AG04449 (cell line): ENCODE measurements at regions of chr19 and their contacts with region 1.

Region 1: GRCh38 chr19:10565567-10566407 is at the start of gene KRI1:
- DNase-seq: peak; percentile 67
- H3K4me3 ChIP-seq: peak within 1 kb of the TSS; percentile 98
- CTCF ChIP-seq: peak; percentile 53

Region 2: GRCh38 chr19:10551698-10552301 is 14.0 kb before region 1 on chr19:
- CTCF ChIA-PET with region 1: interaction called, 14 read pairs
- POLR2A ChIA-PET with region 1: no interaction called
- DNase-seq: no peak
- H3K4me3 ChIP-seq: no peak overlapping the region
- CTCF ChIP-seq: no peak

Region 3: GRCh38 chr19:10653715-10654492 is 88.1 kb after region 1 on chr19 and contains the start of gene ILF3:
- CTCF ChIA-PET with region 1: interaction called, 644 read pairs
- POLR2A ChIA-PET with region 1: no interaction called
- DNase-seq: peak; percentile 100
- H3K4me3 ChIP-seq: peak within 1 kb of the TSS; percentile 97
- CTCF ChIP-seq: no peak